Adrenal gland (tissue), 19 donors: ENCODE measurements at regions of chr11 and their contacts with region 1.

Region 1: GRCh38 chr11:131064373-131064991 is 148.2 kb upstream of the SNX19 start:
- DNase-seq: peak; percentile 39 to 69 (median 49)
- H3K4me3 ChIP-seq: no peak overlapping the region
- H3K27ac ChIP-seq: no peak overlapping the region
- H3K4me1 ChIP-seq: no peaks in the 10 kb centered on the region
- H3K27me3 ChIP-seq: peaks cover 4% of the 10 kb centered on the region
- CTCF ChIP-seq: peak; percentile 49 to 79 (median 68)
- POLR2A ChIP-seq: no peak

Region 2: GRCh38 chr11:131511794-131512193 is 447.3 kb after region 1 on chr11:
- intact Hi-C with region 1: loop called in 1 of 2 experiments (anchors 5 kb)
- DNase-seq: peak in 3 of 7 donors; percentile 30 to 53 (median 48)
- H3K4me3 ChIP-seq: no peak overlapping the region
- H3K27ac ChIP-seq: no peak overlapping the region
- H3K4me1 ChIP-seq: no peaks in the 10 kb centered on the region
- H3K27me3 ChIP-seq: no peaks in the 10 kb centered on the region
- CTCF ChIP-seq: peak; percentile 22 to 48 (median 46)
- POLR2A ChIP-seq: no peak

Region 3: GRCh38 chr11:131674051-131674755 is 609.7 kb after region 1 on chr11:
- intact Hi-C with region 1: loop called (anchors 2 to 10 kb)
- DNase-seq: peak; percentile 50 to 91 (median 76)
- H3K4me3 ChIP-seq: no peak overlapping the region
- H3K27ac ChIP-seq: no peak overlapping the region
- H3K4me1 ChIP-seq: no peaks in the 10 kb centered on the region
- H3K27me3 ChIP-seq: no peaks in the 10 kb centered on the region
- CTCF ChIP-seq: peak; percentile 89 to 97 (median 93)
- POLR2A ChIP-seq: no peak